ENCODE measurements at regions of chr3 and their contacts with region 1.

Region 1: DNA sequence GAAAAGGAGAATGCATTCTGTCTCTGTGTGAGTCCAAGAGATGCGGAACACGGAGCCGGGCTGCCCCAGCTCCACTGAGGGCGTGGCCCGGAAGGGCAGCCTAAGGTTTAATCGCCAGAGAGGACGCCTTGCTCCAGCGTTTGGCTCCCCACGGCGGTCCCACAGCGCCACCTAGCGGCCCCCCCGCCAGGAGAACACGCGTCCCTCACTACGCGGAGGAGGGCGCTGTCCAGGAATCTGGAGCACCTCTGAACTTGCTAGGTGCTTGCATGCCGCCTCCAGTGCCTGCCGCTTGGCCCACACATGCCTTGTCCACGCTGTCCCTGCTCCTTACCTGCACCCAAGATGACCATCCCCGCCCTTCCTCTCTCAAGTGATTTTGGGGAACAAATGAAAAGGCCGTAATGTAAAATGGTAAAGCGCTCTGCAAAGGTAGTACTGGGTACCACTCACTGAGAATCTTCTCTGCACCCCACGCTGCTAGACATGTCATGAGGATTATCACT is 14.4 kb upstream of the MRPS22 start:
- DNase-seq: peak; percentile 88 to 92 (median 92)
- ATAC-seq: peak; percentile 98
- H3K4me3 ChIP-seq: no peak overlapping the region
- H3K27ac ChIP-seq: no peak overlapping the region
- H3K4me1 ChIP-seq: peaks cover 5% of the 10 kb centered on the region
- H3K27me3 ChIP-seq: no peaks in the 10 kb centered on the region
- CTCF ChIP-seq: peak; percentile 98 to 100 (median 100)
- POLR2A ChIP-seq: no peak

Region 2: DNA sequence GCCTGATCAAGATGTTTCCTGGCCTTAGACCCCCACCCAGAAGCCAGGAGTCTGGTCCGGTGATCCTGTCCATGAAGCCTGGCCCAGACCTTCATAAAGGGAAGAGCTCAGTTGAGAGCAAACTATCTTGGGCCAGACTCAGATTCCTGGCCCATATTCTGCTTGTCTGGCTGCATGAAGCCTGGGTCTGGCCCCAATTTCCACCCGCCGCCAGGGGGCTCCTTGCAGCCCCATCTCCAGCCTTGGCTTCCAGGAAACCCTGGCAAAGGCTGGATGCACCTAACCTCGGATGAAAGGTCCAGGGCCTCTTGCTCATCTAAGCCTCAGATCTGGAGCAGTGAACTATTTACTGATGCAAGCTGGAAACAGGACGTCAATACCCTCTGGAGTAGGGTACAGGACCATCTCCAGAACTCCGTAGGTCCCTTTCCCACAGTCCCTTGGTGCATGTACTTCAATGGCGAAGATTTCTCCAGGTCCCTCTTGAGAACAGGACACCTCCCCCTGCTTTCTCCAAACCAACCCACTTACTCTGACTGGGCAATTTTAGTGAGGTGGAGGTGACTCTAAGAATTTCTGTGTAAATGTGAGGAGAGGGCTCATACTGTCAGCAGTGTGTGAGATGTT is 388.0 kb before region 1 on chr3:
- intact Hi-C with region 1: loop called (anchors 5 kb)
- DNase-seq: peak in 3 of 4 donors; percentile 35 to 70 (median 47)
- ATAC-seq: no peak
- H3K4me3 ChIP-seq: no peak overlapping the region
- H3K27ac ChIP-seq: no peak overlapping the region
- H3K4me1 ChIP-seq: peaks cover 57% of the 10 kb centered on the region
- H3K27me3 ChIP-seq: peaks cover 6 to 69% of the 10 kb centered on the region in 2 donors
- CTCF ChIP-seq: peak; percentile 24 to 57 (median 44)
- POLR2A ChIP-seq: no peak

Region 3: DNA sequence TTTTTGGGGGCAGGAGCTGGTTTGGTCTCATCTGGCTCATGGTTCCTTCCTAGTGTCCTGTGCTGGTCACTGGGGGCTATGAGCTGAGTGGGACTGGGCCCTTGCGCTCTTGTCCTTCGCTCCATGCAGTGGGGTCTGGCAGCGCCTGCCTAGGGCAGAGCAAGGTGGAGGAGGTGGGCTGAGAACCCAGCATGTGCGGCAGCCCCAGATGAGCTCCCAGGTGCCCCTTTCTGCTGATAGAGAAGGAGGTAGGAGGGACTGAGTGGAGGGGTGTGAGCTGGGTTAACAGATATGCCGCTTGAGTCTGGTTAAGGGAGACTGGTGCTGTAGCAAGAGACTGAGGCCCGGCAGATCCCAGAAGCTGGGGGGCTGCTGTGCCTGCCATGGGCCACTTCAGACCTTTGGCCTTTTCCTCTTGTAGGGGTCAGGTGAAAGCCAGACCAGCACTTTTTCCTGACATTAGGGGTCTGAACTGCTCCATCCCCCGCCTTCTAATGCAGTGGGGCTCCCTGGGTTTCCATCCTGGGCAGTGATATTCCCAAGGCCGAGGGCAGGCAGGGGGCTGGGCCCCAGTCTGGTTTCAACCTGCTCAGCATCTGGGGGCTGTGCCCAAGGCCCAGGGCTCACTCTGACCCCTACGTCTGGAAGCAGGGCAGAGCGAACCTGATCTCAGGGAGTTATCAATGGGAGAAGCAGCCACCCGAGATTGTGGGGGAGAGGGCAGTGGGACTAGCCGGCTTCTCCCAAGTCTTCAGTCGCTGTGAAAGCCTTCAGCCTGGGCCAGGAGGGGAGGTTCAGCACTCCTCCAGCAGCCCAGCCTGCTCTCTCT is 221.8 kb before region 1 on chr3:
- intact Hi-C with region 1: loop called (anchors 5 kb)
- DNase-seq: no peak
- ATAC-seq: no peak
- H3K4me3 ChIP-seq: no peak overlapping the region
- H3K27ac ChIP-seq: no peak overlapping the region
- H3K4me1 ChIP-seq: peaks cover 40% of the 10 kb centered on the region
- H3K27me3 ChIP-seq: no peaks in the 10 kb centered on the region
- CTCF ChIP-seq: no peak
- POLR2A ChIP-seq: no peak

Measured in body of pancreas (tissue), 4 donors.